Posterior vena cava (tissue), 2 donors: ENCODE measurements at regions of chr3 and their contacts with region 1.

Region 1: DNA sequence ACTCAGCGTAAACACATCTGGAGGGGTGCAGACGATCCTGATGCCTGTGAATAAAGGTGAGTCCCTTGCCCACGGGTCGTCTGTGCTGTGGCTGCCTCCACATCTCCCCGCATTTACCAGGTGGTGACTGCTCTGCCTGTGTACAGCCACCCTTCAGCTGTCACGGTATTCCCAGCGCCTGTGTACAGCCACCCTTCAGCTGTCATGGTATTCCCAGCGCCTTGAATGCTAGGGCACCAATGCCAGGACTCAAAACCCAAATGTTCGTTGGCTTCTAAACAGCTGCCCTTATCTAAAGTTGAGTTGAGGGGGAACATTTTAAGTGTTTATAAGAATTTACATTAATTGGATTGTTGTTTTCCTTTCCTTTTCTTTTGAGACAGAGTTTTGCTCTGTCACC is 27.4 kb downstream of the MAP6D1 start:
- DNase-seq: no peak

Region 2: DNA sequence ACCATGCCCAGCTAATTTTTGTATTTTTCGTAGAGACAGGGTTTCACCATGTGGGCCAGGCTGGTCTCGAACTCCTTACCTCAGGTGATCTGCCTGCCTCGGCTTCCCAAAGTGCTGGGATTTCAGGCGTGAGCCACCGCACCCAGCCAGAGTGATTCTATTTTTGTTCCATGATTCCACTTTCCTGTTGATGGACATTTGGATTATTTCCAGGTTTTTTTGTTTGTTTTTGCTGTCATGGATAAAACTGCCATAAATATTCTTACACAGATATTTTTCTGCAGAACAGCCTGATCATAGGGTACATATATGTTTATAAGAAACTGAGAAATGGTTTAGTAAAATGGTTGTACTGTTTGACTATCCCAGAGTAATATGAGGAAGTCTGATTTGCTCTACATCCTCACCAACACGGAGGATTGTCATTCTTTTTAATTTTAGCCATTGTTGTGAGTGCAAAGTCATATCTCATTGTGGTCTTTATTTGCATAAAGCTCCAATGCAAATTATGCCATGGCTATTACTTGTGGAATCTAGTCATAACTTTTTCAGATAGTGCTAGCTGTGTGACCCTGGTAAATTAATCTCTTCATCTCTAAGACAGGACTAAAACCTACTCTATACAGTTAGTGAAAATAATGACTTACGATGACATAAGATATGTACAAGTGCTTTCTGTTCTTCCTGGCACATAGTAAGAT is 15.3 kb before region 1 on chr3:
- intact Hi-C with region 1: loop called in 1 of 2 experiments (anchors 1 kb)
- DNase-seq: no peak

Region 3: DNA sequence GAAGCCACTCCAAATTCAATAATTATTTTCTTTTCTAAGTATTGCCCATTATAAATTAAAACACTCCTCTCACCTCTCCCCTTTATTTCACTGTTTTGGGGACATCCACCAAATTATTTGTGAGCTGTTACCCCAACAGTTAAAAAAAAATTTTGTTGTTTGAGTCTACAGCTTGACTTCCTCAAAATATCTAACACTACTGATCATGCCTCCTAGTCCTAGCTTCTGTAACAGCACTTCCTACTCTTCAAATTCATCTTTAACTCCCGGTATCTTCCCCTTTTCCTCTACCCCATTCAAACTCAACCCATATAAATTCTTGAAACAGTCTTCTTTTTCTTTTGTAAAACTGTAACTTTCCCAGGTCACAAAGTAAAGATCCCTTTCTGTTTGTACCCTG is 70.8 kb after region 1 on chr3:
- intact Hi-C with region 1: no loop called
- DNase-seq: no peak